ENCODE measurements at regions of chr1 and their contacts with region 1.

Region 1: DNA sequence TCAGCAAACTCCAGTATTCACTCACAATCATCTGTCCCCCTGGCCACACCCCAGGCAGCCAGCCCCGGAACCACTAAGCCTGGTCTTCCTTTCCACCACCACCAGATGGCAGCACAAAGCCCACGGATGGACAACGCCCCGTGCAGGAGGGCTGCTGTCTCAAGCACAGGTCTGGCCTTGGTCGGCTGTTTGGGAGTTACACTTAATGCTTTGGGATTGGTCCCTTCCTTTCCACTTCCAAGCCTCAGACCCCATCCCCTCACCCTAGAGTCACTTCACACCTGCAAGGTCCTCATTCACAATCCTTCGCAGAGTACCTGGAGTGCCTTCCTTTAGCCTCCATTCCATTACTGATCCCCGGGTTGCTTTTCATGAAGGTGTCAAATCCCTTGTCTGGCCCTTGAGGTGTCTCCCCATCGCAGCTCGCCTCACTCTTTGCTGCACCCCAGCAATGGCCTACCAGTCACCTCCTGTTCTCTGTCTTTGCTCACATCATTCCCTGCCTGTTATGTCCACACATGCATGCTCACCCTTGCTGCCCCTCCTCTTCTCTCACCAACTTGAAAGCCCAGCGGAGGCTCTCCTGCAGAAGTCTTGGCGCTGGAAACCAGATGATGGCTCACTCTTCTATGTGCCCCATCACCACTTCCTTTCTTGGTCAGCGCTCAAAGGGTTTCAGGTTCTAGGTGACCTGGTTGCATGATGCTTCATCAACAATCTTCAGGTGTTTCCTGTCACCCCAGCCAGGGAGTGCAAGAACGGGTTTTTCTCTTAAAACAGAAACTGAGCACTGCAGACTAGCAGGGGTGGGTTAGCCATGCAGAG is 24.9 kb upstream of the KCNA2 start:
- DNase-seq: peak; percentile 33 to 44
- ATAC-seq: peak; percentile 45 to 75
- H3K4me3 ChIP-seq: no peak overlapping the region
- H3K27ac ChIP-seq: no peak overlapping the region
- H3K4me1 ChIP-seq: peaks cover 0 to 6% of the 10 kb centered on the region in 2 donors
- H3K27me3 ChIP-seq: no peaks in the 10 kb centered on the region
- CTCF ChIP-seq: peak; percentile 61 to 84 (median 79)
- POLR2A ChIP-seq: no peak

Region 2: DNA sequence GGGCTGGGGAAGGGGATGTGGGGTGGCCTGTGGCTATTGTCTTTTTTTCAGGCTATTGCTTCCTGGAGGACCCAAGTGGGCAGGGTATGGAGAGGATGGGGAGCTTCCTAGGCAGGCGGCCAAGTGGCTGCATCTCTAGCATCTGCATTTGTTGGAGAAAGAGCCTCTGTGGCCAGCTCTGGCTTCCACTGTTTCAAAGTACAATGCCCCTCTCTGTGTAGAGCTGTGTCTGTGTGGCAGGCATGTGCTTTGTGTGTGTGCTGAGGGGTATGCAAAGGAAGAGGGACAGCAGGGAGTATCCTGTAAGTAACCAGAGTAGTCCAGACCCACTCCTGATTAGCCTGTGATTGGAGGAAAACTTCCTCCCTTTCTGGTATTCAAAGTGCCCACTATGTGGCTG is 65.5 kb before region 1 on chr1:
- in situ Hi-C with region 1: no loop called
- intact Hi-C with region 1: no loop called
- DNase-seq: no peak
- ATAC-seq: no peak
- H3K4me3 ChIP-seq: no peak overlapping the region
- H3K27ac ChIP-seq: no peak overlapping the region
- H3K4me1 ChIP-seq: no peaks in the 10 kb centered on the region
- H3K27me3 ChIP-seq: peaks cover 0 to 6% (median 3%) of the 10 kb centered on the region in 3 donors
- CTCF ChIP-seq: no peak
- POLR2A ChIP-seq: no peak

Region 3: GRCh38 chr1:110674337-110675059 is 43.4 kb after region 1 on chr1 and contains the start of gene KCNA3:
- in situ Hi-C with region 1: no loop called
- intact Hi-C with region 1: loop called (anchors 5 kb)
- DNase-seq: no peak
- ATAC-seq: no peak
- H3K4me3 ChIP-seq: peak within 1 kb of the TSS; percentile 46 to 53 (median 50)
- H3K27ac ChIP-seq: no peak within 1 kb of the TSS
- H3K4me1 ChIP-seq: no peaks in the 10 kb centered on the region
- H3K27me3 ChIP-seq: peaks cover 24 to 45% (median 44%) of the 10 kb centered on the region in 3 donors
- CTCF ChIP-seq: no peak
- POLR2A ChIP-seq: no peak
- total RNA-seq, gene KCNA3: 0.18 to 0.20 TPM in 2 of 4 donors, not detected in the others

Region 4: DNA sequence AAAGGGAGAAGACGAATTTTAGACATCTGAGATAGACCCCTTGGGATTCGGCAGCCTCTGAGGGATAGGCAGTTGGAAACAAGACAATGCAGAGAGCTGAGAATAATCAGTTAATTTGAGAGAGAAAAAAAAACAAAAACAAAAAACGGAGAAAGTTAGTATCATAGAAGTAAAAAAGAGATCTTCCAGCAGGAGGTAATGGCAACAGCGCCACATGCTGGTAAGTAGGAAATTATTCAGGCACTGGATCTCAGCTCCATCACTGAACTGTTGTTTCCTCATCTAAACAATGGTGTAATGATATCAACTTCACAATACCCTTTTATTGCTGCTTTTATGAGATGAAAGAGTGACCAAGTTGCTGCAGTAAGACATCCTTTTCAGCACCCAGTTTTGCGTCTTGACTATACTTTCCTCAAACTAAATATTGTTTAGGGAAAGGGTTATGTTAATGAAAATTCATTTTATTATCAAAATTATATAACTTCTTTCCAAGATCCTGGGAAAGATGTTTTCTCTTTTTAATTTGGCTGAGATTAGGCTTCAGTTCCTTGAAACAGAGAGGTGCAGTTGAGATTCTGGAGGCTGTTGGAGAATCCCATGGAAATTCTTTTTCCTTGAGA is 135.1 kb after region 1 on chr1:
- in situ Hi-C with region 1: loop called in 2 of 4 experiments (anchors 5 to 10 kb)
- intact Hi-C with region 1: loop called (anchors 1 kb)
- DNase-seq: no peak
- ATAC-seq: no peak
- H3K4me3 ChIP-seq: no peak overlapping the region
- H3K27ac ChIP-seq: no peak overlapping the region
- H3K4me1 ChIP-seq: no peaks in the 10 kb centered on the region
- H3K27me3 ChIP-seq: peaks cover 0 to 2% (median 0%) of the 10 kb centered on the region in 3 donors
- CTCF ChIP-seq: peak in 4 of 5 experiments; percentile 34 to 68 (median 55)
- POLR2A ChIP-seq: no peak

Region 5: GRCh38 chr1:110780600-110781484 is 149.8 kb after region 1 on chr1:
- in situ Hi-C with region 1: loop called in 2 of 4 experiments (anchors 5 kb)
- intact Hi-C with region 1: loop called (anchors 5 kb)
- DNase-seq: peak; percentile 37 to 40
- ATAC-seq: peak; percentile 52 to 58
- H3K4me3 ChIP-seq: no peak overlapping the region
- H3K27ac ChIP-seq: no peak overlapping the region
- H3K4me1 ChIP-seq: no peaks in the 10 kb centered on the region
- H3K27me3 ChIP-seq: no peaks in the 10 kb centered on the region
- CTCF ChIP-seq: peak; percentile 46 to 79 (median 69)
- POLR2A ChIP-seq: no peak

Measured in gastrocnemius medialis (tissue), 4 donors.